GM10248 (cell line): ENCODE measurements at regions of chr18 and their contacts with region 1.

Region 1: DNA sequence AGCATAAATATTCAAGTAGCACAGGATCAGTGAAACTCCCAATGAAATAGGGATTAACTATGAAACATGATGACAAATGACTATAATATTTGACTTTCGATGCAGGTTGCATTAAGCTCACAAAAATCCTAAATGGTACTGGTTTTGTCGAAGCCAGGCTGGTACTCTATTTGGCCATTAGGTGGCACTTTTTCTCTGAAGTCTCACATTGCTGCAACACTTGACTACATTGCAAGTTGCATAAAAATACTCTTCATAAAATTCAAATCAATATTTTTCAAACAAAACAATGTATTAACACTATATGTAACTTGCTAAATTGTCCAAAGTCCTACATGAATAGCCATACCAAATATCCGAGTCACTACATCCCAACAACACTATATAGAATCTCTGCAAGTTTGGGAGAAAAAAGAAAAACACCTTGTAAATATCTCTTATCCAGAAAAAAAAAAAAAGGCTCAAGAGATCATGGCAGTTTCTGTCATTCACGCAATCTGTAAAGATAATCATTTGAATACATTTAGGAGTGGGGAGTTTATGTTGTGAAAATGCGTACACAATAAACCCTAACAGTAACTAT is 9.5 kb downstream of the RTTN start:
- DNase-seq: peak; percentile 21
- CTCF ChIP-seq: peak; percentile 45

Region 2: DNA sequence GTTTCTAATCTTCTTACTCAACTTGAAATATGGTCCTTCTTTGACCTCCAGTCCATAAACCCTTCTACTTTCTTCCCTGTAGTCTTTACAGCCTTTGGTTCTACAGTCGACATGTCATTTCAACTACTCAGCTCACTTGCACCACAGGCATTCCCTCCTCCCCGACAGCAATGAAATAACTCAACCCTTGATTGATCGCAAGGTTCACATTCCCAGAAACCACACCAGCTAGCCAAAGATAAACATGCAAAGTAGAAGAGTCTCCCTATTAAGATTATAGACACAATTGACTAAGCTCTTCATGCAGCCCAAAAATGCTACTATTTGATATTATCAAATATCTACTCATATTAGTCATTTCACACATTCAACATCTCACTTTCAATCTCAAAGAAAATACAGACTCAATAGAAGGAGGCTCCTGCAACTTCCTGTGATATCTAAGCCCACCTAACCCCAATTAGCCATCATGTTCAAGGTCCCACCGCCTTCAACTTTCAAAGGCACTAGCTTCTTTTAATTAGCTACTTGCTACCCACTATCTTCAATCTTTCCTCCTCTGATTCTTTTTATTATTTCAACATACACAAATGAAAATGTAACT is 41.2 kb before region 1 on chr18:
- CTCF ChIA-PET with region 1: interaction called, 19 read pairs
- POLR2A ChIA-PET with region 1: no interaction called
- DNase-seq: no peak
- CTCF ChIP-seq: no peak

Region 3: GRCh38 chr18:70172225-70172624 is 23.7 kb before region 1 on chr18:
- CTCF ChIA-PET with region 1: interaction called, 19 read pairs
- POLR2A ChIA-PET with region 1: no interaction called
- DNase-seq: no peak
- CTCF ChIP-seq: peak; percentile 43

Region 4: DNA sequence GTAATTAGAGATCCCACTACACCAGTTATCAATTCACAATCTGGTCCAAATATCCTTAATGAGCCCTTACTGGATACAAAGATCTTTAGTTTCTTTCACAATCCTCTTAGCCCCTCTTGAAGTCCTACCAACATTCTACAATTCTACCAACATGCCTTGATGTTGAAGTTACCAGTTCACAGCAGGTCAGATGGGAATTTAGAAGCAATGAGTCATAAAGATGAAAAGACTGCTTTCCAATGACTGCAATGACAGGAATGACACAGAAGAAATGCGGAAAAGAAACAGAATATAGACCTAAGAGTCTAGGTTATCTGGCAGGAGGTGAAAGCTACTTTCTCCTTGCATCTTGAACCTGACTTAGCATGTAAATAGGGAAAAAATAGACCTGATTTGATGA is 14.9 kb before region 1 on chr18:
- CTCF ChIA-PET with region 1: interaction called, 43 read pairs
- POLR2A ChIA-PET with region 1: interaction called, 5 read pairs
- DNase-seq: no peak
- CTCF ChIP-seq: no peak

Region 5: DNA sequence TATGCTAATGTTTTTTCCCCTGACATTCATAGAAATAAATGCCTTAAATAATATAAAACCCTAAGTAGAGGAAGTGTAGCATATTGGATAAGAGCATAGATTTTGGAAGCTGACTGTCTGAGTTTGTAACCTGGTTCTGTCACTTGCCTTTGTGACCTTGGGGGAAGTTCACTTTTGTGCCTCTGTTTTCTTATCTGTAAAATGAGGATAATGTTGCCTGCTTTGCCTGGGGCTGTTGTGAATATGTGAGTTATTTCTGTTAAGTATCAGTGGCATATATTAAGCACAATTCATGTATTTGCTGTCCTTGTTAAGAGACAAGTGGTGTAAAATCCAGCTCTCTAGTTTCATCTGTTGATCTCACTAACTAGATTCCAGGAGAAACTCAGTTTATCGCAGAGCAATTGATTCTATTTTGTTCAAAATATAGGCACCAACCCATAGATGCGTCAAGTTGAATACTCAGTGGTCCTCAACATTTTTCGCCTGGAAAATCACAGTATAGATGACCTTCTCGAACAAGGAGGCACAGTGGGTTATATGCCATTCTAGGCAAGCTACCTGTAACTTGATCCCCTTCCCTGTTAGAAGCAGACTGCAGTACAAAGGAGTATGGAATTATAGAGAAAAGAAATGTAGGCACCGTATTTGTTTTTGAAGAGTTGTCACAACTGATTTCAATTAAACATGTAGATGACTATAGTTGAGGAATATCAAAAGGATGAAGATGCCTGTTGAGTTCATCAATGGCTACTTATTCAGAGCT is 159.9 kb after region 1 on chr18:
- CTCF ChIA-PET with region 1: no interaction called
- POLR2A ChIA-PET with region 1: no interaction called
- DNase-seq: no peak
- CTCF ChIP-seq: no peak

Region 6: DNA sequence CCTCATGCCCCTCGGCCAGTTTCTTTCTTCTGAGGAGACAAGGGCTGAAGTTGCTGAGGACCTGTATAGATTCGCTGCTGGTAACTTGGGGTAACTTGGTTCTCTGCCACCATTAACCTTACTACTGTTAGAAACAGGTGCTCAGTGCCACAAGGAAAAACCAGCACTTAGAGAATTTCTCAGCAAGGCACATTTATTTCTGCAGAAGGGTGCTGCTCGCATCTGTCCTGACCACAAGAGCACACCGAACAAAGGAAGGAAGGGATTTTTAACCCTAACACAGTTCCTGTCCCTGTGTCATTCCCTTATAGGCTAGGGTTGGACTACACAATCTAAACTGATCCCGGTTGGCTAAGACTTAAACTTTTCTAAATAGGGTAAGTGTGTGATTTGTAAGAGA is 247.0 kb after region 1 on chr18:
- CTCF ChIA-PET with region 1: interaction called, 10 read pairs
- POLR2A ChIA-PET with region 1: no interaction called
- DNase-seq: no peak
- CTCF ChIP-seq: no peak

Region 7: GRCh38 chr18:70454704-70455322 is 258.9 kb after region 1 on chr18:
- CTCF ChIA-PET with region 1: interaction called, 31 read pairs
- POLR2A ChIA-PET with region 1: no interaction called
- DNase-seq: peak; percentile 54
- CTCF ChIP-seq: peak; percentile 67